Activated CD4-positive, alpha-beta T cell treated with anti-CD3 and anti-CD28 coated beads, Interleukin-2, amount 10 ng/mL, durations not matched to agents 24 days and 14 days (primary cell): ENCODE measurements at regions of chr17 and their contacts with region 1.

Region 1: DNA sequence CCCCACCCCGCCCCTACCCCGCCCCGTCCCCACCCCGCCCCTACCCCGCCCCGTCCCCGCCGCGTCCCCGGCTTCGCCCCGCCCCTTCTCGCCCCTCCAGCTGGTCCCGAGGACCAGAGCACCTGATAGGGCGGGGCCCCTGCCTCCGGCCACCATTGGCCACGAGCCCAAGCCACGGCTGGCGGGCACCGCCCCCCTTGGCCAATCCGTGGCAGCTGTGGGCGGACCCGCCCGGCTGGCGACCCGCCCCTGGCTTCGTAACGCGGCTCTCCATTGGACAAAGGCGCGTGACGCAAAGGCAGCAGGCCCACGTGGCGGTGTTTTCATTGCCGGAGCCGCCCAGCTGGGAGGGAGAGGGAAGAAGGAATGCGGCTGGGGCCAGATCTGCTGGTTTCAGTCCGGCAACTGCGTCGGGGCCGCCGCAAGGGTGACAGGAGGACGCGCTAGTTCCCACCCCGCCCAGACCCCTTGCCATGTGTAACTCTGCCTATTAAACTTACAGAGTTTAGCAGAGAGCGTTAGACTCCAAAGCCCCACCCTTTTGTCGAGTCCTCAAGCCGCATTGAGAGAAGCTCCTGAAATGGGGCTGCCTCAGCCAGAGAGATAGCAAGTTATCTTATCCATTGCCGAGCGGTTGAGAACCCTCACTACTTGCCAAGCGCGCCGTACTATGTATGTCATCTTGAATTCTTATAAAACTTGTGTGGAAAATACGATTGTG is 403 bp upstream of the WIPI1 start:
- DNase-seq: peak; percentile 100
- H3K4me3 Mint-ChIP-seq: peak overlapping the region; percentile 92
- H3K27ac Mint-ChIP-seq: peak overlapping the region; percentile 86
- H3K4me1 Mint-ChIP-seq: peaks cover 61% of the 10 kb centered on the region
- H3K27me3 Mint-ChIP-seq: no peaks in the 10 kb centered on the region

Region 2: DNA sequence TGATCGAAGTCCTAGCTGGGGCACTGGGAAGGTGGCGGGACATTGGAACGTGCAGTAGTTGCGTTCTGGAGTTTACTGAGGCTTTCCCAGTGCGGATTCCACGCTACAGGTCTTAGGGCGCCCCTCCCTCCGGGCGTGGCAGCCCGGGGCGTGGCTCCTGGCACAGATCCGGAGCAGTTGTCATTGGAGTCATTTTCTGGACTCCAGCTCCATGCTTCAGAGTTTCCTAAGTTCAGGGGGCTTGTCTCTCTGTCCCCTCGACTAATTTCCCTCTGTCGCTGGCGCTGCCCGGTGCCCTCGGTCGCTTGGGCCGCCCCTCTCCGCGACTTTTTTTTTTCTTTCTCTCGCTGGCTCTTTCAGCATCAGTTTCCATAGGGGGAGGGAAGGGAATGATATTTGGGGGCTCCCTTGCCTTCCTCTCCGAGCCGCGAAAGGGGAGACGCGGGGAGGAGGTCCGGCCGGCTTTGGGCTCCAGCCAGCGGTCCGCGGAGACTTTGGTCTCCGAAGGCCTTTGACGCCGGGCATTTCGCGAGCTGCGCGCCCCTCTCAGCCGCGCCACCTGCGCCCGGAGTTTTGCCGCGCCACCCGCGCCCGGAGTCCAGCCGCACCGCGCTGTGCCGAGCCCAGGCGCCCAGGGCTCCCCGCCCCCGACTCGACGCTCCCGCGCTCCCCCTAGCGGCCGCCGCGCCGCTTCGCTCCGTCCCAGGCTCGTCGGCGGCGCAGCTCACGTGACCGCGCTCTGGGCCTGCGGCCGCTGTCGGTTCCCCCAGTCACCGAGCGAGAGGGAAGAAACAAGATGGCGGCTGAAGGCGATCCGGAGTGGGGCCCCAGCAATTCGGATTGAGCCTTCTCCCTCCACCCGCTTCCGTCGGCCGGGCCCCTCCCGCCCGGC is 632.7 kb before region 1 on chr17 and contains the start of gene BPTF:
- intact Hi-C with region 1: loop called (anchors 10 kb)
- DNase-seq: peak; percentile 98
- H3K4me3 Mint-ChIP-seq: peak within 1 kb of the TSS; percentile 95
- H3K27ac Mint-ChIP-seq: peak within 1 kb of the TSS; percentile 96
- H3K4me1 Mint-ChIP-seq: peaks cover 29% of the 10 kb centered on the region
- H3K27me3 Mint-ChIP-seq: peaks cover 14% of the 10 kb centered on the region
- total RNA-seq, gene BPTF: 74.5 and 77.1 TPM in 2 replicates

Region 3: GRCh38 chr17:68035523-68036303 is 422.0 kb before region 1 on chr17 and contains the start of gene KPNA2:
- intact Hi-C with region 1: loop called (anchors 2 kb)
- DNase-seq: peak; percentile 98
- H3K4me3 Mint-ChIP-seq: peak within 1 kb of the TSS; percentile 95
- H3K27ac Mint-ChIP-seq: peak within 1 kb of the TSS; percentile 92
- H3K4me1 Mint-ChIP-seq: peaks cover 16% of the 10 kb centered on the region
- H3K27me3 Mint-ChIP-seq: no peaks in the 10 kb centered on the region
- total RNA-seq, gene KPNA2: 210 and 240 TPM in 2 replicates

Region 4: DNA sequence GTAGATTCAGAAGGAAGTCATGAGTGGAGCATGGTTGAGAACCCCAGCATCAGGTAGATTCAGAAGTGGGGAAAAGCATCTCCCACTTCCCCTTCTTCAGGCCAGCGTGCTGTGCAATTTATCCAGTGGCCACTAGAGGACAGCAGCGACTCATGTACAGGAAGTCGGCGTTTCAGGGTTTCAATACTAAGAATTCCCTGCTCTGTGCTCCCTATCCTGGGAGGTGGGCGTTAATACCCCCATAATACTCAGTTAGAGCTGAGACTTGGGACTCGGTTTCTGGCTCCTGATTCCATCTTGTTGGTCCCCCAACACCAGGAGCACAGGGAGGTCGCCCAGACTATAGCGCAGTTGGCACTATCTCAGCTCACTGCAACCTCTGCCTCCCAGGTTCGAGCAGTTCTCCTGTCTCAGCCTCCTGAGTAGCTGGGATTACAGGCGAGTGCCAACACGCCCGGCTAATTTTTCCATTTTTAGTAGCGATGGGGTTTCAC is 285.2 kb before region 1 on chr17:
- intact Hi-C with region 1: loop called (anchors 2 kb)
- DNase-seq: peak; percentile 93
- H3K4me3 Mint-ChIP-seq: no peak overlapping the region
- H3K27ac Mint-ChIP-seq: no peak overlapping the region
- H3K4me1 Mint-ChIP-seq: peaks cover 23% of the 10 kb centered on the region
- H3K27me3 Mint-ChIP-seq: peaks cover 1% of the 10 kb centered on the region

Region 5: DNA sequence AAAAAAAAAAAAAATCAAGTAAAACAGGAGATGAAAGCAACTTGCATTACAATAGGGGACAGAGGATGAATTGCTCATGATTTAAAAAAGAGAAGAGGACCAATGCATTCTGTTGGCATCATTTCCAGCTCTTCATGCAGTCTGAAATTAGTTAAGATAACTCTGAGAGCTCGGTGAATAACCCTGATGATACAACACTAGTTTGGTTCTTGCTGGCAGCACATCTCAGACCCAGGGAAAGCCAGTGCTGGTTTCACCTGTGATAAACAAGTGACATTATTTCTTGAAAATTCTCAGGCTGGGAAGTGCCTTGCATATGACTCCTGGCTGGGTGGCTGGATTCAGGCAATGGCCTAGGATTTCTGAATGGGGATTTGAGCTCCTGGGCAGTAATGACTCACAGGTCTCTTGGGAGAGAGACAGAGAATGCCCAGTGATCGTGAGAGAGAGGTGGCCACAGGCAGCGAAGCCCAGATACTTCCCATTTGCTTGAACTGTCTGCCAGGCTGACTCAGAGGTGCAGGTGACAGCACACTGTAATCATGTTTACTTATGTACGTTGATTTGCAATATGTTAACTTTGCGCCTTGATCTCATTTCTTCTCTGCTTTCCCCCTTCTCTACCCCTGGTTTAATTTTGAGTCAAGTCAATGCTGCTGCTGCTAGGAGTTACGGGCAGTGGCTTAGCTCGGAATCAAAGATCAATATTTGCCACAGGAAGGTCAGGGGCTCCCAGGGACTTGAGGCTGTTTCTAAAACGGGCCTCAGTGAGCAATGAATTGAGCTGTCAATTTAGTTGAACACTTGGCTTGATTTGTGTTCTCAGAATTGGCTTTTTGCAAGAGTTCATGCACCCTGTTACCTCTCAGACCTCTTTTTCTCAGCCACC is 139.4 kb before region 1 on chr17:
- intact Hi-C with region 1: no loop called
- DNase-seq: no peak
- H3K4me3 Mint-ChIP-seq: no peak overlapping the region
- H3K27ac Mint-ChIP-seq: no peak overlapping the region
- H3K4me1 Mint-ChIP-seq: peaks cover 14% of the 10 kb centered on the region
- H3K27me3 Mint-ChIP-seq: no peaks in the 10 kb centered on the region

Region 6: DNA sequence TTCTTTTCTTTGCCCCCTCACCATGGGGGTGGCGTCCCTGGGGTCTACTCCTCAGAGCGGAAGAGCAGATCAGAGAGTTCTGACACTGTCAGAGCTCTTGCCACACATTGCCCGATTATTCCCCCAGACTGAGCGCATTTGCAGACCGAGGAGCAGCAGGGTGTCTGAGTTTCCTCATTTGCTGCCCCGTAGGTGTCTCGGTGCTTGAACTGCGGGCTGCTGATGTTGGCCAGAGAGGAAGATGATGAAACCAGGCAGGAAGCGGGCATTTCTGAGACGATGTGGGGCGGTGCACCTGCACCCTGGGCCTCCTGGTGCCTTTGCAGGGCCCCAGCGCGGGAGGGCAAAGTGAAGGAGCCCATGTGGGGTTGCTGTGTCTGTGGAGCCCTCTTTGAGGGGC is 111.3 kb before region 1 on chr17:
- intact Hi-C with region 1: loop called (anchors 5 kb)
- DNase-seq: peak; percentile 89
- H3K4me3 Mint-ChIP-seq: peak overlapping the region; percentile 81
- H3K27ac Mint-ChIP-seq: peak overlapping the region; percentile 94
- H3K4me1 Mint-ChIP-seq: peaks cover 62% of the 10 kb centered on the region
- H3K27me3 Mint-ChIP-seq: no peaks in the 10 kb centered on the region

Region 7: DNA sequence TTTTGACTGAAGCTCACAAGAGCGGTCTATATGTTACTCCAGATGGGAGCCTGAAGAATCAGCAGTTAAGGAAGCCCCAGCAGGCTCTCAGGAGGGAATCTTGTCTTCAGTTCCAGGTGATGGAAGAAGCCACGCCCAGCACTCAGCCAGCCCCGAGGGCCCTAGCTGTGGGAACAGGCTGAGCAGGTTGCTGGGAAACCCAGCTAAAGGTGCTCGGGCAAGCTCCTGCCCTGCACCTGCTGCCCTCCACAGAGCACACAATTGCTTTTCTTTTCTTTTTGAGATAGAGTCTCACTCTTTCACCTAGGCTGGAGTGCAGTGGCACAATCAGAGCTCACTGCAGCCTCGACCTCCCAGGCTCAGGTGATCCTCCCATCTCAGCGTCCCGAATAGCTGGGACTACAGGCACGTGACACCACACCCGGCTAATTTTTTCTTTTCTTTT is 32.7 kb before region 1 on chr17:
- intact Hi-C with region 1: no loop called
- DNase-seq: no peak
- H3K4me3 Mint-ChIP-seq: no peak overlapping the region
- H3K27ac Mint-ChIP-seq: no peak overlapping the region
- H3K4me1 Mint-ChIP-seq: peaks cover 2% of the 10 kb centered on the region
- H3K27me3 Mint-ChIP-seq: no peaks in the 10 kb centered on the region

Region 8: DNA sequence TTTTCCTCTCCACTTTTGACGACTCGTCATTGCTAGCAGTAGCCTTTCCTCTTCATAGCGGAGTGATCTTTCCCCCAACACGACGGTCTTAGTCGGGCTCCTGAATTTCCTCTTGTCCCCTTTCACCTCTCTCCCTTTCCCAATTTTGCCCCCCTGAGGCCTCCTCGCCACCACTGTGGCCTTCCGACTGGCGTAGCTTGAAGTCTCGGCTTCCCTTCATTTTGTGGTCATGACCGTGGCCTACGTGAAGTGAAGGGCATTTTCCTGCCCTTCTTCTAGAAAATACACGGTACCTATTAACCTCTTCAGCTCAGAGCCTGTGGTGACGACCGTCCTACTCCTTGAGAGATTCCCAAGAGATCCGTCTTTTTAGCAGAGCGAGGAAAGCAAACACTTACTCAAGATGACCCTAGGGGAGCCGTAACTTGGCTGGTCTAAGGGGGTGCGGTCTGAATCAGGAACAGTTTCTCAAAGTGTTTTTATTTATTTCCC is 55.3 kb after region 1 on chr17:
- intact Hi-C with region 1: no loop called
- DNase-seq: peak; percentile 75
- H3K4me3 Mint-ChIP-seq: peak overlapping the region; percentile 99
- H3K27ac Mint-ChIP-seq: peak overlapping the region; percentile 97
- H3K4me1 Mint-ChIP-seq: peaks cover 57% of the 10 kb centered on the region
- H3K27me3 Mint-ChIP-seq: no peaks in the 10 kb centered on the region

Region 9: DNA sequence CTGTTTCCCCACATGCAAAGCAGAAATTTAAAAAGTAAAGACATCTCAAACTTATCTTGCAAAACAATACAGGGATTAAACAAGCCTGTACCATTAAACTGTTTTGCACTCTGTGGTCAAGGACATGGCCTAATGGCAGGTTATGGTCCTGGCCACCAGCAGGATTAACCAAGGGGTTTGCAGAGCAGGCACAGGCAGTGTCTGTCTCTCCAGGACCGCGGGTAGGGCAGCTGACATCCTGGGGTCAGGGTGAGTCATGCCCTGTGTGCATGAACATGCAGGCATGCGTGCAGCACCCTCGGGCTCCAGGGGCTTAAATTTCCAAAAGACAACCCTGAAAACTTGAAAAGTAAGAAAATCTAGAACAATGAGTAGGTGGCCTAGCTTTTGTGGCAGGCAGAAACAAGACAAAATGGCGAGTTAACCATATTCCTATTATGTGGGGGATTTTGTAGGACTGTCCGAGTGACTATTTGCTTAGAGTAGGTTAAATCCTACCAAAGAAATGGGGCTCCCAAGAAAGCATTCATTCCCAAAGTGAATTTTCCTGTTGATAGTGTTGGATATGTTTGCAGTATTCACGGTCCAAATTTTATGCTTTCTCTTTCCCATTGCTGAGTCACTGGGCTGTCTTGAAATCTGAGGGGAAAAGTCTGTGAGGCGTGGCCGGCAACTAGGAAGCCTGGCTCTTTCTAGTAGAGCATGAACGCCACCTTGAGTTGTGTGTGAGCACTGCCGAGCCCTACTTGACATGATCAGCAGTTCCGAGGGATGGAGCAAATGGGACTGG is 301.8 kb after region 1 on chr17:
- intact Hi-C with region 1: loop called (anchors 2 kb)
- DNase-seq: peak; percentile 88
- H3K4me3 Mint-ChIP-seq: peak overlapping the region; percentile 63
- H3K27ac Mint-ChIP-seq: peak overlapping the region; percentile 32
- H3K4me1 Mint-ChIP-seq: peaks cover 10% of the 10 kb centered on the region
- H3K27me3 Mint-ChIP-seq: no peaks in the 10 kb centered on the region